ENCODE measurements at regions of chr4 and their contacts with region 1.

Region 1: DNA sequence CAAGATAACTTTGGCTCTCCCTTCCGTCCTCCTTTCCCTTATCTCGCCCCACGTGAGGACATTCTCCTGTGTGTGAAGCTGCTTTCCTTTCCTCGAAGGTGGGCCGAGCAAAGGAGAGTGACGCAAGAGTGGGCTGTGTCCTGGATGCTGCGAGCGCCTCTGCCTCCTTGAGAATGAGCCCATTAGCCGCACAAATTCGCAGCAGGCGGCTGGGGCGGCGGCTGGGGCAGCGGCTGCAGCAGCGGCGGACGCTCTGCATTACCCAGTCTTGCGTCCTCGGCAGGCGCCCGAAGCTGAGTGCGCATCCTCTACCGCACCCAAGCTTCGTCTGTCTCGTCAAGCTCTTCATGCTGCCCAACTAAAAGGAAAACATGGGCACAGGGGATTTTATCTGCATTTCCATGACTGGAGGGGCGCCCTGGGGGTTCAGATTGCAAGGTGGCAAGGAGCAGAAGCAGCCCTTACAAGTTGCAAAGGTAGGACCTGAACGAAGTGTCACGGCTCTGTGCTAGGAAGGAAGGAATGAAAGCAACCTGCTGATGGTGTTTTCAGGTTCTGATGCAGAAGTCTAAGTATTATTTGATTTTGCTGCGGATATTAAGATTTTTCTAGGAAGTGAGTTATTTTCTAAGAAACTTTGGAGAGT is at the start of gene SYNPO2:
- DNase-seq: peak; percentile 43
- H3K4me3 Mint-ChIP-seq: peak within 1 kb of the TSS; percentile 70
- H3K27ac Mint-ChIP-seq: no peak within 1 kb of the TSS
- H3K4me1 Mint-ChIP-seq: peaks cover 14% of the 10 kb centered on the region
- H3K27me3 Mint-ChIP-seq: peaks cover 30% of the 10 kb centered on the region
- total RNA-seq, gene SYNPO2: 0.14 TPM in 1 of 2 experiments, not detected in the other

Region 2: DNA sequence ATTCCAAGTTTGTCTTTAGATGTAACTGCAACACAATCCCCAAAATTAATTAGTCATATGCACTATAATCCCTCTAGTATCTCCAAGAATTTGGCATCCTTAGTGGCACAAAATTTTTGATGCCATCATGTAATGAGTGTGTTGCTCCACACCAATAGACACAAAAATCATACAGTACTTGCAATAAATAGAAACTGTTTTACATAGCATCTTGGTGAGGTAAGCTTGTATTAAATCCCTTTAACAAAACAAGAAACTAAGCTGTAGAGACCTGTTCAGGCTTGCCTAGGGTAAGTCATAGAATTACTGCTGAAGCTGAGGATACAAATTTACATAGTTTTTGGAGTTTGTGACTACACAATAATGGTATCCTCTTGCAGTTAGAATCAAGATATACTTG is 471.5 kb before region 1 on chr4:
- CTCF ChIA-PET with region 1: no interaction called
- intact Hi-C with region 1: loop called (anchors 10 kb)
- DNase-seq: no peak
- H3K4me3 Mint-ChIP-seq: no peak overlapping the region
- H3K27ac Mint-ChIP-seq: no peak overlapping the region
- H3K4me1 Mint-ChIP-seq: no peaks in the 10 kb centered on the region
- H3K27me3 Mint-ChIP-seq: peaks cover 3% of the 10 kb centered on the region

Region 3: DNA sequence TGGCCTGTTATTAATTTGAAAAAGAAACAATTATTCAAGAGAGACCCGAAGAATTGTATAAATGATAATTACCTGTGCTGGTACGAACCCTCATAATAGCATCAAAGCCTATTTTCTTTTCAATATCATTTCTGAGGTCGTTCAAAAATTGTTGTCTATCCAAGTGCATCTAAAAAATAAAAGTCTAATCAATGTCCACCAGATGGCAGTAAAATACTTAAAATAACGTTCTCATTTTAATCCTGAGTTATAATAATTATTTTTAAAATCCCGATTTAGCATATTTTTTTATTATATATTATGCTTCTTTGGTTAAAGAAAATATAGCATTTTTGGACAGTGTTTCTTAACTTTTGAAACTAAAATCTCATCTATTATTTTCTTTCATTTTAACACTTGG is 147.9 kb before region 1 on chr4:
- CTCF ChIA-PET with region 1: interaction called, 5 read pairs
- intact Hi-C with region 1: loop called (anchors 1 kb)
- DNase-seq: no peak
- H3K4me3 Mint-ChIP-seq: no peak overlapping the region
- H3K27ac Mint-ChIP-seq: no peak overlapping the region
- H3K4me1 Mint-ChIP-seq: no peaks in the 10 kb centered on the region
- H3K27me3 Mint-ChIP-seq: no peaks in the 10 kb centered on the region

Region 4: DNA sequence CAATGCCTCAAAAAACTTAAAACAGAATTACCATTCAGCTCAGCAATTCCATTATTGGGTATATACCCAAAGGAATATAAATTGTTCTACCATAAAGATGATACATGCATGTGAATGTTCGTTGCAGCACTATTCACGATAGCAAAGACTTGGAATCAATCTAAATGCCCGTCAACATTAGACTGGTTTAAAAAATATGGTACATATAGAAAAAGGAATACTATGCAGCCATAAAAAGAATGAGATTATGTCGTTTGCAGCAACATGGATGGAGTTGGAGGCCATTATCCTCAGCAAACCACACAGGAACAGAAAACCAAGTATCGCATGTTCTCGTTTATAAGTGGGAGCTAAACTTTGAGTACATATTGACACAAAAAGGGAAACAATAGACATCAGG is 11.0 kb before region 1 on chr4:
- CTCF ChIA-PET with region 1: no interaction called
- intact Hi-C with region 1: no loop called
- DNase-seq: no peak
- H3K4me3 Mint-ChIP-seq: no peak overlapping the region
- H3K27ac Mint-ChIP-seq: no peak overlapping the region
- H3K4me1 Mint-ChIP-seq: no peaks in the 10 kb centered on the region
- H3K27me3 Mint-ChIP-seq: peaks cover 4% of the 10 kb centered on the region